Activated T-helper 1 cell treated with anti-CD3 and anti-CD28 coated beads, Interleukin-12 subunit alpha, Interleukin-12 subunit beta, Interleukin-2, Interleukin-4 antibody, amounts not matched to agents 30 ng/mL and 10 ng/mL and 1 ng/mL, durations not matched to agents 14 hours and 24 hours and 36 hours (primary cell): ENCODE measurements at regions of chr6 and their contacts with region 1.

Region 1: GRCh38 chr6:6793388-6794250 is 205.1 kb downstream of the LY86 start:
- DNase-seq: no peak
- H3K4me3 Mint-ChIP-seq: peak overlapping the region; percentile 48
- H3K27ac Mint-ChIP-seq: peak overlapping the region; percentile 82
- H3K4me1 Mint-ChIP-seq: peaks cover 51% of the 10 kb centered on the region
- H3K27me3 Mint-ChIP-seq: peaks cover 10% of the 10 kb centered on the region

Region 2: GRCh38 chr6:6277413-6277812 is 516.2 kb before region 1 on chr6:
- intact Hi-C with region 1: no loop called
- DNase-seq: no peak
- H3K4me3 Mint-ChIP-seq: no peak overlapping the region
- H3K27ac Mint-ChIP-seq: no peak overlapping the region
- H3K4me1 Mint-ChIP-seq: no peaks in the 10 kb centered on the region
- H3K27me3 Mint-ChIP-seq: peaks cover 4% of the 10 kb centered on the region

Region 3: GRCh38 chr6:6515691-6516607 is 277.7 kb before region 1 on chr6:
- intact Hi-C with region 1: loop called (anchors 2 kb)
- DNase-seq: peak; percentile 38
- H3K4me3 Mint-ChIP-seq: no peak overlapping the region
- H3K27ac Mint-ChIP-seq: peak overlapping the region; percentile 21
- H3K4me1 Mint-ChIP-seq: peaks cover 18% of the 10 kb centered on the region
- H3K27me3 Mint-ChIP-seq: peaks cover 80% of the 10 kb centered on the region

Region 4: GRCh38 chr6:6659600-6660327 is 133.9 kb before region 1 on chr6:
- intact Hi-C with region 1: loop called (anchors 1 kb)
- DNase-seq: no peak
- H3K4me3 Mint-ChIP-seq: no peak overlapping the region
- H3K27ac Mint-ChIP-seq: peak overlapping the region; percentile 89
- H3K4me1 Mint-ChIP-seq: peaks cover 84% of the 10 kb centered on the region
- H3K27me3 Mint-ChIP-seq: no peaks in the 10 kb centered on the region

Region 5: GRCh38 chr6:6811151-6812002 is 17.8 kb after region 1 on chr6:
- intact Hi-C with region 1: loop called (anchors 1 kb)
- DNase-seq: no peak
- H3K4me3 Mint-ChIP-seq: peak overlapping the region; percentile 77
- H3K27ac Mint-ChIP-seq: peak overlapping the region; percentile 74
- H3K4me1 Mint-ChIP-seq: peaks cover 29% of the 10 kb centered on the region
- H3K27me3 Mint-ChIP-seq: peaks cover 23% of the 10 kb centered on the region

Region 6: DNA sequence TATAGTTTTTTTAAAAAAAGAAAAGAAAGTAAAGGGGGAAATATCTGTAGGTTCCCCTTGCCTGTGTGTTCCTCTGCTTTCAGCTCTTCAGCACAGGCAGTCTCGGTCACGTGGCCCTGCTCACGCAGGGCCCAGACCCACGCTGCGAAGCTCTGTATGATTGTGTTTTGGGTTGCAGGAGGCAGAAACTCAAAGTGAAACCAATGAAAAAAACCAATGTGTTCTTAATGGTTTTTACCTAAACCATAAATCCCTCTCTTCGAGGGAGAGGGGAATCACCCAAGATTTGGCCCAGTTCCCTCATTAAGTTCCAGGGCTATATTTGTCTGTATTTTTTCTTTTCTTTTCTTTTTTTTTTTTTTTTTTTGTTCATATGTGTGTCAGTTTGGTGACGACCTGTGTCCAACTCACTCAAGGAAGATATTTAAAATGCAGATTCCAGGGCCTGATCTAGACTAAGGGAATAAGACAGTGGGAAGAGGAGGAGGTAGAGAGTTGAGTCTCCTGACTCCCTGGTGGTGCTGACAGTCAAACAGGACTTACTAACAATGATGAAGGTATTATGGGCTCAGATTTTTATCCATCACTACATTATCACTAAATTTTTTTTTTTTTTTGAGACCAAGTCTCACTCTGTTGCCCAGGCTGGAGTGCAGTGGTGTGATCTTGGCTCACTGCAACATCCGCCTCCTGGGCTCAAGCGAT is 280.4 kb after region 1 on chr6:
- intact Hi-C with region 1: loop called (anchors 1 kb)
- DNase-seq: peak; percentile 55
- H3K4me3 Mint-ChIP-seq: no peak overlapping the region
- H3K27ac Mint-ChIP-seq: peak overlapping the region; percentile 74
- H3K4me1 Mint-ChIP-seq: peaks cover 13% of the 10 kb centered on the region
- H3K27me3 Mint-ChIP-seq: peaks cover 70% of the 10 kb centered on the region

Region 7: GRCh38 chr6:7107578-7108195 is 314.1 kb after region 1 on chr6 and contains the start of gene RREB1:
- intact Hi-C with region 1: loop called (anchors 1 kb)
- DNase-seq: peak; percentile 34
- H3K4me3 Mint-ChIP-seq: peak within 1 kb of the TSS; percentile 96
- H3K27ac Mint-ChIP-seq: peak within 1 kb of the TSS; percentile 92
- H3K4me1 Mint-ChIP-seq: peaks cover 41% of the 10 kb centered on the region
- H3K27me3 Mint-ChIP-seq: peaks cover 21% of the 10 kb centered on the region
- total RNA-seq, gene RREB1: 12.3 and 12.7 TPM in 2 replicates